ENCODE measurements at regions of chr2 and their contacts with region 1.

Region 1: GRCh38 chr2:134146620-134147019 is 107.3 kb upstream of the MGAT5 start:
- DNase-seq: peak; percentile 35
- H3K4me3 ChIP-seq: no peak overlapping the region
- H3K27ac ChIP-seq: no peak overlapping the region
- H3K4me1 ChIP-seq: peaks cover 38% of the 10 kb centered on the region
- H3K27me3 ChIP-seq: no peaks in the 10 kb centered on the region
- CTCF ChIP-seq: no peak

Region 2: GRCh38 chr2:134198006-134198634 is 51.5 kb after region 1 on chr2:
- CTCF ChIA-PET with region 1: no interaction called
- dilution Hi-C with region 1: loop called (anchors 5 kb)
- in situ Hi-C with region 1: no loop called
- intact Hi-C with region 1: no loop called
- DNase-seq: no peak
- H3K4me3 ChIP-seq: no peak overlapping the region
- H3K27ac ChIP-seq: no peak overlapping the region
- H3K4me1 ChIP-seq: peaks cover 7% of the 10 kb centered on the region
- H3K27me3 ChIP-seq: no peaks in the 10 kb centered on the region
- CTCF ChIP-seq: no peak

Region 3: GRCh38 chr2:134391751-134392160 is 245.1 kb after region 1 on chr2:
- CTCF ChIA-PET with region 1: no interaction called
- dilution Hi-C with region 1: no loop called
- in situ Hi-C with region 1: no loop called
- intact Hi-C with region 1: no loop called
- DNase-seq: peak; percentile 96
- H3K4me3 ChIP-seq: no peak overlapping the region
- H3K27ac ChIP-seq: no peak overlapping the region
- H3K4me1 ChIP-seq: peaks cover 20% of the 10 kb centered on the region
- H3K27me3 ChIP-seq: no peaks in the 10 kb centered on the region
- CTCF ChIP-seq: no peak

Region 4: GRCh38 chr2:134435504-134435903 is 288.9 kb after region 1 on chr2:
- CTCF ChIA-PET with region 1: interaction called, 10 read pairs
- dilution Hi-C with region 1: no loop called
- in situ Hi-C with region 1: no loop called
- intact Hi-C with region 1: no loop called
- DNase-seq: no peak
- H3K4me3 ChIP-seq: no peak overlapping the region
- H3K27ac ChIP-seq: no peak overlapping the region
- H3K4me1 ChIP-seq: peaks cover 11% of the 10 kb centered on the region
- H3K27me3 ChIP-seq: no peaks in the 10 kb centered on the region
- CTCF ChIP-seq: no peak

Region 5: GRCh38 chr2:134918526-134919340 is 772.1 kb after region 1 on chr2 and contains the start of gene CCNT2:
- CTCF ChIA-PET with region 1: no interaction called
- dilution Hi-C with region 1: no loop called
- in situ Hi-C with region 1: no loop called
- intact Hi-C with region 1: loop called (anchors 10 kb)
- DNase-seq: peak; percentile 99
- H3K4me3 ChIP-seq: peak within 1 kb of the TSS; percentile 91 to 96 (median 92)
- H3K27ac ChIP-seq: peak within 1 kb of the TSS; percentile 91
- H3K4me1 ChIP-seq: peaks cover 8% of the 10 kb centered on the region
- H3K27me3 ChIP-seq: no peaks in the 10 kb centered on the region
- CTCF ChIP-seq: no peak
- total RNA-seq, gene CCNT2: 27.3 to 31.0 TPM